ENCODE measurements at regions of chr2 and their contacts with region 1.

Region 1: GRCh38 chr2:121649596-121650314 is 493 bp upstream of the CLASP1 start:
- DNase-seq: peak; percentile 97 to 98 (median 97)
- H3K4me3 ChIP-seq: peak overlapping the region; percentile 78 to 95 (median 87)
- H3K4me3 Mint-ChIP-seq: peak overlapping the region; percentile 90 to 93
- H3K27ac ChIP-seq: peak overlapping the region; percentile 93 to 100
- H3K27ac Mint-ChIP-seq: peak overlapping the region; percentile 97 to 99 (median 99)
- H3K4me1 ChIP-seq: peaks cover 23 to 35% of the 10 kb centered on the region in 2 donors
- H3K4me1 Mint-ChIP-seq: peaks cover 54% of the 10 kb centered on the region
- H3K27me3 ChIP-seq: no peaks in the 10 kb centered on the region
- H3K27me3 Mint-ChIP-seq: peaks cover 0 to 1% (median 0%) of the 10 kb centered on the region in 3 donors
- CTCF ChIP-seq: no peak

Region 2: GRCh38 chr2:121530212-121530705 is 119.5 kb before region 1 on chr2:
- intact Hi-C with region 1: loop called (anchors 2 to 5 kb)
- DNase-seq: peak; percentile 68 to 77 (median 71)
- H3K4me3 ChIP-seq: peak overlapping the region; percentile 84 to 98 (median 96)
- H3K4me3 Mint-ChIP-seq: peak overlapping the region; percentile 88 to 100
- H3K27ac ChIP-seq: peak overlapping the region; percentile 97 to 100
- H3K27ac Mint-ChIP-seq: peak overlapping the region; percentile 98 to 100 (median 99)
- H3K4me1 ChIP-seq: peaks cover 15 to 30% of the 10 kb centered on the region in 2 donors
- H3K4me1 Mint-ChIP-seq: peaks cover 36% of the 10 kb centered on the region
- H3K27me3 ChIP-seq: no peaks in the 10 kb centered on the region
- H3K27me3 Mint-ChIP-seq: peaks cover 0 to 1% (median under 1%) of the 10 kb centered on the region in 3 donors
- CTCF ChIP-seq: no peak

Region 3: GRCh38 chr2:121611730-121612705 is 37.7 kb before region 1 on chr2:
- intact Hi-C with region 1: loop called (anchors 2 to 5 kb)
- DNase-seq: peak; percentile 85 to 98 (median 88)
- H3K4me3 ChIP-seq: peak overlapping the region in 1 of 3 experiments; percentile 18
- H3K4me3 Mint-ChIP-seq: no peak overlapping the region
- H3K27ac ChIP-seq: peak overlapping the region; percentile 58 to 80
- H3K27ac Mint-ChIP-seq: no peak overlapping the region
- H3K4me1 ChIP-seq: peaks cover 0 to 2% of the 10 kb centered on the region in 2 donors
- H3K4me1 Mint-ChIP-seq: no peaks in the 10 kb centered on the region
- H3K27me3 ChIP-seq: no peaks in the 10 kb centered on the region
- H3K27me3 Mint-ChIP-seq: peaks cover 0 to 3% (median 0%) of the 10 kb centered on the region in 3 donors
- CTCF ChIP-seq: no peak

Region 4: GRCh38 chr2:121717529-121717928 is 67.8 kb after region 1 on chr2:
- intact Hi-C with region 1: loop called in 1 of 2 experiments (anchors 5 kb)
- DNase-seq: no peak
- H3K4me3 ChIP-seq: no peak overlapping the region
- H3K4me3 Mint-ChIP-seq: no peak overlapping the region
- H3K27ac ChIP-seq: no peak overlapping the region
- H3K27ac Mint-ChIP-seq: peak overlapping the region in 1 of 7 donors; percentile 66
- H3K4me1 ChIP-seq: peaks cover 6 to 9% of the 10 kb centered on the region in 2 donors
- H3K4me1 Mint-ChIP-seq: peaks cover 14% of the 10 kb centered on the region
- H3K27me3 ChIP-seq: no peaks in the 10 kb centered on the region
- H3K27me3 Mint-ChIP-seq: peaks cover 0 to 3% (median 0%) of the 10 kb centered on the region in 3 donors
- CTCF ChIP-seq: no peak

Region 5: DNA sequence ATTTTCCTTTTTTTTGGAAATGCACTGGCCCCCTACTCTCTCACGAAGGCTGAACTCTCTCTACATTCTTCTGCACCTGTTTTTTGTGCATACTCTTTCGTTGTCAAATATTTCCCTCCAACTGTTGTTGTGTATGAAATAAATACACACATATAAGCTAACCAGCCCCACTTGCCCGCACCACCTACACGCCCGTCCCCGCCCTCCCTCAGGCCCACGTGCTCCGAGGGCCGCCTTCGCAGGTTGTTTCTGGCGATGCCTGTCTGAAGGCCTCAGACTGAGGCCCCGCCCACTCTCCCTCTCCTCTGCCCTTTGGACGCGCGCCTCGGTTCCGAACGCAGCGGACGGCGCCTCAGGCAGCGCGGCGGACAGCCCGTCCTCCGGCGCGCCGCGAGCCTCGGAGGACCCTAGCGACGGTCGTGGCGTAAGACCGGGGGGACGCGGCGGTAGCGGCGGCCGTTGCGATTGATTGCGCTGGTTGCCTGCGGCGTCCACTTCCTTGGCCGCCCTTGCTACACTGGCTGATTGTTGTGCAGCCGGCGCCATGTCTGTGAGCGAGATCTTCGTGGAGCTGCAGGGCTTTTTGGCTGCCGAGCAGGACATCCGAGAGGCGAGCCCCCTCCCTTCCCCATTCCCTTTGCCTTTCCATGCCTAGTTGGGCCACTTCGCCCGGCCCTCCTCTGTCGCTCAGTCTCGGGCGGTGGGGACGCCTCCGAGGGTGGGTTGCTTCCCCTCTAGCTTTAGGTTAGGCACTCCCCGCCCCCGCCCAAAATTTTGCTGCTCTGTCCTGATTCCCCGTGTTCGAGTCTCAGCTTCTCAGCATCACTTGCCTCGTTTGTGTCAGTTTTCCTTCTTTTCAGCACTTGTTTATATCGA is 105.7 kb after region 1 on chr2 and contains the start of gene TSN:
- intact Hi-C with region 1: loop called (anchors 5 kb)
- DNase-seq: peak; percentile 95 to 99 (median 97)
- H3K4me3 ChIP-seq: peak within 1 kb of the TSS; percentile 88 to 97 (median 97)
- H3K4me3 Mint-ChIP-seq: peak within 1 kb of the TSS; percentile 94 to 95
- H3K27ac ChIP-seq: peak within 1 kb of the TSS; percentile 88 to 95
- H3K27ac Mint-ChIP-seq: peak within 1 kb of the TSS; percentile 90 to 96 (median 93)
- H3K4me1 ChIP-seq: peaks cover 19 to 26% of the 10 kb centered on the region in 2 donors
- H3K4me1 Mint-ChIP-seq: peaks cover 18% of the 10 kb centered on the region
- H3K27me3 ChIP-seq: no peaks in the 10 kb centered on the region
- H3K27me3 Mint-ChIP-seq: peaks cover 0 to 2% (median 0%) of the 10 kb centered on the region in 3 donors
- CTCF ChIP-seq: no peak
- polyA plus RNA-seq, gene TSN: 12.2 to 66.5 (median 65.5) TPM